ENCODE measurements at regions of chr9 and their contacts with region 1.

Region 1: DNA sequence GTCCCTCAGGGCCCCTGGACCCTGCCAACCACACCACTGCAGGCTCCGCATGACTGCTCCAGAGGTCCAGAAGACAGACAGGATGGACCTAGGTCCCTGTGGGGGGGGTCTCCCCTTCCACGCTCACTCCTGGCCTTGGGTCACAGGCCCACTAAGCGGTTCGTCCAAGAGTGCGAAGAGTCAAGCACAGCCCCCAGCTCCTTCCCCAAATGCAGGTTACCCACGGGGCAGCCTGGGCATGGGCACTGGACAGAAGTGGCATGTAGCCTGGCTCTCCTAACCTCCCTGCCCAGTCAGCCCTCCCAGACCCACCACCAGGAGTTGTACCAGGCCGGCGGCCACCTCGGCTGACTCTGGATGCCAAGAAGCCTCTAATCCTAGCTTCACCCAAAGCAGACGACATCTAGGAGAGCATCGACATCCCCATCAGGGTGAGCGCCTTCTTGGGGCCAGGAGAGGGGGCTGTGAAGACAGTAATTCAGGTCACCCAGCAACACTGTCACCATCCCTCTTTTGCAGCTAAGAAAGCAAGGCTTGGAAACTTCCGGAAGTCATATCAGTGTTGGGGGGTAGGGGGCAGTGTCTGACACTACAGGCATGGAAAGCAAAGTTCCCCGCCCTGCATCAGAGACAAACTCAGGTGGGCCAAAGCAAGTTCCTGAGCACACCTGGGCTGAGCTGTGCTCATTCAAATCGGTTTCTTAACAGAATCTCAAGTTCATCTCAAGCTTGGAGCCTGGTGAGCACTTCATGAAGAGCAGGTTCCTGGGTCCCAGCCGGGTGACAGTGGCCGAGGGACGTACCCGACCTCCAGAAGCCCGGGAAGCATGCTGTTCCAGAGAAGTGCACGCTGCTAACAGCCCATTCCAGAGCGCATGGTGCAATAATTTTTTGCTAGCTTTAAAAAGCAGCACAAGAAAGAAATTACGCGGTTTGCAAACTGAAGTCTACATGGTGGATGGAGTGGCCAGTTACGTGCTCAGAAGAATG is 68.7 kb downstream of the SEMA4D start:
- DNase-seq: peak; percentile 75
- ATAC-seq: peak; percentile 86
- H3K4me3 Mint-ChIP-seq: 0 out of 2 replicates have a peak overlapping the region, but pooled peaks have one; percentile 14
- H3K27ac Mint-ChIP-seq: peak overlapping the region; percentile 92
- H3K4me1 Mint-ChIP-seq: peaks cover 58% of the 10 kb centered on the region
- H3K27me3 Mint-ChIP-seq: no peaks in the 10 kb centered on the region
- CTCF ChIP-seq: peak; percentile 42

Region 2: DNA sequence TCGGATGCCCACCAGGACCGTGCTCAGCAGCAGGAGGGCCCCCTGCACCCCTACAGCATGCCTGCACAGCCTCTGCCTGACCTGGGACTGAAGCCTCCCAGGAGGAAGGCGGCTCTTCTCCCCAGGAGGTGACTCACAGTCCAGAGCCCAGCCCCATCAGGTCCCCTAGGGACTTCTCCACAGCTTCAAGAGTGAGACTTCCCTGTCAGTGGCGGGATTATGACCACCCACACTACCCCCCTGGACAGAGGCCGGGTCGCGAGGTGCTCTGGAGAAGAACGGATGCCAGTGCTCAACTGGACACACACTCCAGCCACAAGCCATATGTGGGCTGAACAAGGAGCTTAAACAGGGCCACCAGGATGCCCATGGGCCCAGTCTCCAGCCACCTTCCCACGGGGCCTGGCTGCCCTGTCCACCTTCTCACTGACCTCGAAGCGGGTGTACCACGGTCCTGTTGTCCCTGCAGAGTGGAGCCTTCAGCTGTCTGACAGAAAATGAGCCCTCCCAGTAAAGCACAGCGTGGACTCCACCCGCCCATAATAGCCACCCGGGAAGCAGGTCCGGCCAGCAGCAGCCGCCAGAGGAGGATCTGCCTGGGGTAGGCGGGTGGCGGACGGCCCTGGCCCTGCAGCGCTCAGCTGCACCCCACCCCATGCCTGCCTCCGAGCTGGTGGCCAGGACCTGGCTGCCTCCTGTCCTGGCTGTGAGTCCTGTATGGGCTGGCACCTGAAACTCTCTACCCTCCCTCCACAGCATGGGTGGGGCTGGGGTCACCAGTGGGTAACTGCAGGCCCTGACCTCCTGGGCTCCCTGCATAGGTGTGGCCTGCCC is 14.0 kb after region 1 on chr9:
- CTCF ChIA-PET with region 1: interaction called, 24 read pairs
- POLR2A ChIA-PET with region 1: no interaction called
- DNase-seq: no peak
- ATAC-seq: no peak
- H3K4me3 Mint-ChIP-seq: no peak overlapping the region
- H3K27ac Mint-ChIP-seq: no peak overlapping the region
- H3K4me1 Mint-ChIP-seq: peaks cover 56% of the 10 kb centered on the region
- H3K27me3 Mint-ChIP-seq: no peaks in the 10 kb centered on the region; the same call in 1 of the 2 replicates
- CTCF ChIP-seq: no peak

Region 3: GRCh38 chr9:89461265-89461664 is 32.1 kb after region 1 on chr9:
- CTCF ChIA-PET with region 1: interaction called, 15 read pairs
- POLR2A ChIA-PET with region 1: no interaction called
- DNase-seq: no peak
- ATAC-seq: 0 out of 2 replicates have a peak, but pooled peaks have one; percentile 14
- H3K4me3 Mint-ChIP-seq: no peak overlapping the region
- H3K27ac Mint-ChIP-seq: no peak overlapping the region; the same call in none of the 2 replicates
- H3K4me1 Mint-ChIP-seq: peaks cover 74% of the 10 kb centered on the region
- H3K27me3 Mint-ChIP-seq: no peaks in the 10 kb centered on the region
- CTCF ChIP-seq: no peak

Region 4: DNA sequence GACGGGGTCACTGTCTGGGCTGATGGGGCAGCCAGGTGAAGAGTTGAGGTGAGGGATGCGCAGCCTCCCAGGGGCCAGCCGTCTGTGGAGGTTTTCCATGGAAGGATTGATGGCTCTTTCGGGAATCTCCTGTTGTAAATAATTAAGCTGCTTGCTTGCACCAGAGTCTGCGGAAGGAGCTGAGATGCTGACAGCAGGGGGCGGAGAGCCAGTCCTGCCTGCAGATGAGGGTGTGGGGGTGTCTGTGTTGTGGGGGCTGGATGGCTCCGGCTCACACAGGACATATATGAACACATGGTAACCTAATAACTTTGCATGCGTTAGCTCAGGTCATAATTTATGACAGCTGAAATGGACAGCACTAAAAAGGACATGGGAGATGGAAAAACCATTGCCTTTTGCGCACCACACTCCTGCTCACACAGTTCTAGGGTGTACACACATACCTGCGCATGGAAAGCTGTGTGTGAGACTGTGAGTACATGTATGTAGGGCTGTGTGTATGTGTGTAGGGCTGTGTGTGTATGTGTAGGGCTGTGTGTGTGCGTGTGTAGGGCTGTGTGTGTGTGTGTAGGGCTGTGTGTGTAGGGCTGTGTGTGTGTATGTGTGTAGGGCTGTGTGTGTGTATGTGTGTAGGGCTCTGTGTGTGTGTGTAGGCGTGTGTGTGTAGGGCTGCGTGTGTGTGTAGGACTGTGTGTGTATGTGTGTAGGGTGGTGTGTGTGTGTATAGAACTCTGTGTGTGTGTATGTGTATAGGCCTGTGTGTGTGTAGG is 105.5 kb after region 1 on chr9:
- CTCF ChIA-PET with region 1: interaction called, 10 read pairs
- POLR2A ChIA-PET with region 1: no interaction called
- DNase-seq: no peak
- ATAC-seq: no peak
- H3K4me3 Mint-ChIP-seq: no peak overlapping the region
- H3K27ac Mint-ChIP-seq: no peak overlapping the region
- H3K4me1 Mint-ChIP-seq: peaks cover 5% of the 10 kb centered on the region
- H3K27me3 Mint-ChIP-seq: no peaks in the 10 kb centered on the region
- CTCF ChIP-seq: no peak

Region 5: DNA sequence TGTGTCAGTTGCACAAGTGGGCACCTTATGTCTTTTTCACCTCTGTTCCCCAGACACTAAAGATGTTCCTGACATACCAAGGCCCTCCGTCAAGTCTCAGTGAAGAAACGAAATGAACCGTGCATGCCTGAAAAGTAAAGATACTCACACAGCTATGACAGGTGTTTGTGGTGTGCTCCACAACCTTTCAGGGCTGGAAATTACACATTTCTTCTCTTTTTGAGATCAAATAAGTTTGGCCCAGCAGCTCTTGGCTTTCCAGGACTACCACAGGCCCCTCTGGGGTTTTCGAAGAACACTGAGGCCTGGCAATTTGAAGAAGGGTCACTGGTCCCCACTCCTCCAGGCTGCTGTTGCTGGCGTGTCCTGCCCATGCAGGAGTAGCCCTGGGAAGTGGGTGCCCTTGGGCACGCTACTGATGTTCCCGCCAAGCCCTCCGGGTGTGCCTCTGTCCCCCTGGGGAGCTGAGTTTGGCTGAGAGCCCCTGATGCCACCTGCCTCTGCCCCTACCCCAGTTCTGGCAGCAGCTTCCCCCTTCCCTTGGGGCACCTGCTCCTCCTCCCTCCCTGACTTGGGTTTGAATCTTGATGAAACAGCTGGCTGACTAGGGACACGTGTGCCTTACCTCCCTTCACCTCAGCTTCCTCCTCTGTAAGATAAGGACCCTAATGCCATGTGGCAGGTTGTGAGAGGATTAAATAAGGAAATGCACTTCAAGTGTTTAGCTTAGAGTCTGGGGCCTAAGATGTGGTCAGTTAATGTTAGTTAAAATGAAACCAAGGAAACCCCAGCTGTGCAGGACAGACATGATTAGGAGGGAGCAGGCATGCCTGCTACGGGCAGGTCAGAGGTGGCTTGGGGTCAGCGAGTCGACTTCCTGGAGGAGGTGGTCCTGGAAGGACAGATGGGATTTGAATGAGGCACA is 126.5 kb after region 1 on chr9:
- CTCF ChIA-PET with region 1: interaction called, 135 read pairs
- POLR2A ChIA-PET with region 1: no interaction called
- DNase-seq: no peak
- ATAC-seq: no peak
- H3K4me3 Mint-ChIP-seq: no peak overlapping the region
- H3K27ac Mint-ChIP-seq: no peak overlapping the region
- H3K4me1 Mint-ChIP-seq: peaks cover 22% of the 10 kb centered on the region
- H3K27me3 Mint-ChIP-seq: peaks cover 3% of the 10 kb centered on the region; the same call in 1 of the 2 replicates
- CTCF ChIP-seq: no peak

Region 6: GRCh38 chr9:89576404-89576839 is 147.2 kb after region 1 on chr9:
- CTCF ChIA-PET with region 1: interaction called, 11 read pairs
- POLR2A ChIA-PET with region 1: no interaction called
- DNase-seq: no peak
- ATAC-seq: no peak
- H3K4me3 Mint-ChIP-seq: no peak overlapping the region
- H3K27ac Mint-ChIP-seq: no peak overlapping the region
- H3K4me1 Mint-ChIP-seq: no peaks in the 10 kb centered on the region
- H3K27me3 Mint-ChIP-seq: no peaks in the 10 kb centered on the region
- CTCF ChIP-seq: peak; percentile 68

Region 7: DNA sequence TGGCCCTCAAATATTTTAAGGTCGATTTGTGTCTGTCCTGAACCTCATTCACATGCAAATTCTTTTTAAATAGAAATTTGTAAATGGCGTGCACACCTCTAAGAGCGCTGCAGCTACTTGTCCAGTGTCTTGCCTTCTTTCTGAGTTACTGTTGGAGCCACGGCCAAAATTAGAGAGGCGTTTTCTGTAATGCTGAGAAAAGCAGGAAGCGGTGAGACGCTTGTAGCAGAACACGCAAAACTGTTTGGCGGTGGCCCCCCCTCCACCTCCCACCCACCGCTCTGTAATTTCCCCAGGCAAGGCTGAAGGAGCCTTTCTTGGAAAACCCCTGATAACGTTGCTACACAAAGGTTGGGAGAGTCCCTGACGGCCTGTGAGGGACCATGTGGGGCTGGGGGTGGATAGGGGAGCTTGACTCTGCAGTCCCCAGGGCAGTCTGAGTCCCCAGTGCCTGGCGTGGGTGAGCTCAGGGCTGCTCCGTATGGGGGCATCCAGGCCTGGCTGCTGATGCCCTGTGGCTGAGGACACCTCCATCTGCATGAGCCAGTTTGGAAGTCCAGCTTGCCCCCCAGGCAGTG is 272.1 kb after region 1 on chr9:
- CTCF ChIA-PET with region 1: no interaction called
- POLR2A ChIA-PET with region 1: no interaction called
- DNase-seq: no peak
- ATAC-seq: no peak
- H3K4me3 Mint-ChIP-seq: no peak overlapping the region
- H3K27ac Mint-ChIP-seq: no peak overlapping the region
- H3K4me1 Mint-ChIP-seq: peaks cover 48% of the 10 kb centered on the region
- H3K27me3 Mint-ChIP-seq: no peaks in the 10 kb centered on the region
- CTCF ChIP-seq: no peak

Measured in WTC11 (cell line).